Activated T-helper 1 cell treated with anti-CD3 and anti-CD28 coated beads, Interleukin-12 subunit alpha, Interleukin-12 subunit beta, Interleukin-2, Interleukin-4 antibody, amounts not matched to agents 30 ng/mL and 10 ng/mL and 1 ng/mL, durations not matched to agents 14 hours and 24 hours and 36 hours (primary cell): ENCODE measurements at regions of chr4 and their contacts with region 1.

Region 1: DNA sequence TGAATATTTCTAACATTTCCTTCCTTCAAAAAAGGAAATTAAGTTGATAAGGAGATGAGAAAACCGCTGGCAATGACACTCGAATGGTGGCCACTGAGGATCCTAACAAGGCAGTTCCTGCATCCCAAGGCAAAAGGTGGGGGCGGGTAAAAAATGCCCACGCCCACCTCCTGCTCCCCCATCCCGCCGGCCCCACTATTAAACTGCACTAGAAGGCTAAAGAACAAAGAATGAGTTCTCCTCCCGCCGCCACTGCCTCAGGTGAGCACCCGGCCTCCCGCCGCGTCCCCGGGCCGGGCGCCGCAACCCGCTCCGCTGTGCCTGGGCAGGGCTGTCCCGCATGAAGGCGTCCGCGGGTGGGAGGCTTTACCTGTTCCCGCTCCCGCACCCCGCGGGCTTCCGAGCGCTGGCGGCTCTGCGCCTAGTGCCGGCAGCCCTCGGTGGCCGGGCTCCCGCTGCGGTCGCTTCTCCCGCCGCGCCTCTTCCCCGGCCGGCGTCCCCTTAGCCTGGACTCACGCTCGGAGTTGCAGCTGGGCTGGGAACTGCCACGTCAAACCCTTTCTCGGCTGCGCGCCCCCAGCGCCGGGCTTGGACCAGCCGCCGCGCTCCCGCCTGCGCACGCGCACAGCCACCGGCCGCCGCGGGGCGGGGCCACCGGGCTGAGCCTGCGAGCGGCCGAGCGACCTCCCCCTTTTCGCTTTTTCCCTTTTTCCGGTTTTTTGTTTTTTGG is at the start of gene SEC24D:
- DNase-seq: peak; percentile 87
- H3K4me3 Mint-ChIP-seq: peak within 1 kb of the TSS; percentile 99
- H3K27ac Mint-ChIP-seq: peak within 1 kb of the TSS; percentile 99
- H3K4me1 Mint-ChIP-seq: peaks cover 34% of the 10 kb centered on the region
- H3K27me3 Mint-ChIP-seq: no peaks in the 10 kb centered on the region
- total RNA-seq, gene SEC24D: 50.0 and 55.2 TPM in 2 replicates

Region 2: GRCh38 chr4:118684873-118685811 is 150.6 kb before region 1 on chr4 and contains the start of gene METTL14:
- intact Hi-C with region 1: loop called (anchors 1 kb)
- DNase-seq: peak; percentile 83
- H3K4me3 Mint-ChIP-seq: peak within 1 kb of the TSS; percentile 97
- H3K27ac Mint-ChIP-seq: peak within 1 kb of the TSS; percentile 88
- H3K4me1 Mint-ChIP-seq: peaks cover 28% of the 10 kb centered on the region
- H3K27me3 Mint-ChIP-seq: no peaks in the 10 kb centered on the region
- total RNA-seq, gene METTL14: 44.6 and 48.3 TPM in 2 replicates

Region 3: GRCh38 chr4:118816538-118817177 is 19.1 kb before region 1 on chr4:
- intact Hi-C with region 1: loop called (anchors 2 kb)
- DNase-seq: no peak
- H3K4me3 Mint-ChIP-seq: no peak overlapping the region
- H3K27ac Mint-ChIP-seq: peak overlapping the region; percentile 45
- H3K4me1 Mint-ChIP-seq: peaks cover 5% of the 10 kb centered on the region
- H3K27me3 Mint-ChIP-seq: no peaks in the 10 kb centered on the region

Region 4: GRCh38 chr4:118865091-118865708 is 29.5 kb after region 1 on chr4:
- intact Hi-C with region 1: loop called (anchors 1 kb)
- DNase-seq: no peak
- H3K4me3 Mint-ChIP-seq: no peak overlapping the region
- H3K27ac Mint-ChIP-seq: no peak overlapping the region
- H3K4me1 Mint-ChIP-seq: no peaks in the 10 kb centered on the region
- H3K27me3 Mint-ChIP-seq: peaks cover 14% of the 10 kb centered on the region

Region 5: GRCh38 chr4:119300101-119300978 is 464.6 kb after region 1 on chr4:
- intact Hi-C with region 1: loop called (anchors 5 kb)
- DNase-seq: peak; percentile 93
- H3K4me3 Mint-ChIP-seq: peak overlapping the region; percentile 97
- H3K27ac Mint-ChIP-seq: peak overlapping the region; percentile 97
- H3K4me1 Mint-ChIP-seq: peaks cover 38% of the 10 kb centered on the region
- H3K27me3 Mint-ChIP-seq: no peaks in the 10 kb centered on the region